Body of pancreas (tissue), 4 donors: ENCODE measurements at regions of chr1 and their contacts with region 1.

Region 1: GRCh38 chr1:86370601-86371022 is 25.5 kb downstream of the ODF2L start:
- DNase-seq: no peak
- ATAC-seq: no peak
- H3K4me3 ChIP-seq: no peak overlapping the region
- H3K27ac ChIP-seq: no peak overlapping the region
- H3K4me1 ChIP-seq: no peaks in the 10 kb centered on the region
- H3K27me3 ChIP-seq: no peaks in the 10 kb centered on the region
- CTCF ChIP-seq: no peak
- POLR2A ChIP-seq: no peak

Region 2: DNA sequence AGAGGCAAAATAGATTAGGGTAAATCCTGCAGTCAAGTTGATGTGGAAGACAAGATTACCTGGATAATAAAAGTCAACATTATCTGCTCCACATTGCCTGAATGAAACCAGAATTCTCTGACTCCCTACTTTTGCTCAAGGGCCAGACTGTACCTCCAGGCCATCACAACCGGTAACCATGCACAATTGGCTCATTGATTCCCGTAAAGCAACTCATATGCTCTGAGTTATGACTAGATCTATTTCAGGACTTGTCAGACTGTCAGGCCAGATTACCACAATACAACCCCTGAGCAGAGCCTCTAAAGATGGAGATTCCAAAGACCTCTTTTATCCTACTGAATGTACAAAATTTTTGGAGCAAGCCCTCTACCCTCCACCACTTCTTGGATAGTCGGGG is 64.9 kb before region 1 on chr1:
- intact Hi-C with region 1: no loop called
- DNase-seq: no peak
- ATAC-seq: no peak
- H3K4me3 ChIP-seq: no peak overlapping the region
- H3K27ac ChIP-seq: no peak overlapping the region
- H3K4me1 ChIP-seq: no peaks in the 10 kb centered on the region
- H3K27me3 ChIP-seq: no peaks in the 10 kb centered on the region
- CTCF ChIP-seq: no peak
- POLR2A ChIP-seq: no peak

Region 3: GRCh38 chr1:86499987-86500593 is 129.5 kb after region 1 on chr1:
- intact Hi-C with region 1: loop called (anchors 10 kb)
- DNase-seq: no peak
- ATAC-seq: peak; percentile 53
- H3K4me3 ChIP-seq: no peak overlapping the region
- H3K27ac ChIP-seq: no peak overlapping the region
- H3K4me1 ChIP-seq: peaks cover 7% of the 10 kb centered on the region
- H3K27me3 ChIP-seq: no peaks in the 10 kb centered on the region
- CTCF ChIP-seq: peak; percentile 70 to 98 (median 92)
- POLR2A ChIP-seq: no peak